BJ (cell line): ENCODE measurements at regions of chr11 and their contacts with region 1.

Region 1: GRCh38 chr11:656426-656825 is 19.4 kb downstream of the DRD4 start:
- DNase-seq: no peak
- H3K4me3 ChIP-seq: no peak overlapping the region
- H3K27me3 ChIP-seq: no peaks in the 10 kb centered on the region
- CTCF ChIP-seq: no peak

Region 2: DNA sequence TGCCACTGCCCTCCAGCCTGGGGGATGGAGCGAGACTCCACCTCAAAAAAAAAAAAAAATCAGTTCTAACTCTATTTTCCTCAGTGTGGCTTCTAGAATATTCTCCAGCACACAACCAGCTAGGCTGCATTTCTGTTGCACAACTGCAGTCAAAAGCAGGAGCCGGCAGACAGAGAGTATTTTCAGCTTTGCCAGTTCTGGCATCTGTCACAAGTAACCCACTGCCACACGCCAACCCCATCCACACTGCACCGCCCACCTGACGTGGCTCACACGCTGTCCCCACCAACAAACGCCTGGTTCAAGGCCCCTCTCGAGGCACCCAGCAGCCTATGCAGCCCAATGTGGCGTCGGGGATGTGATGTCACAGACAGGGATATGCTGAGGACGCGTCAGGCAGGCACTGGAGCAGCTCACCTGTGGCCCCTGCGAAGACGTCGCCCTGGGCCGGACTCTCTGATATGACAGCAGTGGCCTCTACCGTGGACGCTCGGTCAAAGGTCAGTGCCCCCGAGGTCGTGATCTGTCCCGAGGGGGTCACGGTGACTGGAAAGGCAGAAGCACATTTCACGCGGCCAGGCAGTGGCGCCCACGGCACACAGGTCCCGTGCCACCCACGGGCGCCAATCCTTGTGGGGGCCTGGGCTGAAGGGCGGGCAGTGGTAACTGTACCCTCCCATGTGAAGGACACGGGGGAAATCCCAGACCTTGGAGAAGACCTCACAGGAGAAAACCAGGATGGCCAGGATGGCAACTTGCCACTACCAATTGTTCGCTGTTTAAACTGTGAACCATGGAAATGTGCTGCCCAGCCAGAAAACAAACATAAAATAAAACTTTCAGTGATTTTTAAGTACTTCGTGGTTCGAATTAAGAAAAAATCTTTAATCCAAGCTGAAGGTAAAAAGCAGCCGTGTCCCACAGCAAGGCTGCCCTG is 23.1 kb after region 1 on chr11:
- CTCF ChIA-PET with region 1: no interaction called
- POLR2A ChIA-PET with region 1: interaction called, 10 read pairs
- DNase-seq: no peak
- H3K4me3 ChIP-seq: no peak overlapping the region
- H3K27me3 ChIP-seq: no peaks in the 10 kb centered on the region
- CTCF ChIP-seq: no peak